Activated CD4-positive, alpha-beta memory T cell treated with anti-CD3 and anti-CD28 coated beads for 36 hours (primary cell): ENCODE measurements at regions of chr15 and their contacts with region 1.

Region 1: GRCh38 chr15:68820295-68821189 is at the start of gene ANP32A:
- DNase-seq: peak; percentile 96
- H3K4me3 Mint-ChIP-seq: peak within 1 kb of the TSS; percentile 99
- H3K27ac Mint-ChIP-seq: peak within 1 kb of the TSS; percentile 99
- H3K4me1 Mint-ChIP-seq: peaks cover 31% of the 10 kb centered on the region
- H3K27me3 Mint-ChIP-seq: no peaks in the 10 kb centered on the region
- total RNA-seq, gene ANP32A: 190 to 204 TPM

Region 2: DNA sequence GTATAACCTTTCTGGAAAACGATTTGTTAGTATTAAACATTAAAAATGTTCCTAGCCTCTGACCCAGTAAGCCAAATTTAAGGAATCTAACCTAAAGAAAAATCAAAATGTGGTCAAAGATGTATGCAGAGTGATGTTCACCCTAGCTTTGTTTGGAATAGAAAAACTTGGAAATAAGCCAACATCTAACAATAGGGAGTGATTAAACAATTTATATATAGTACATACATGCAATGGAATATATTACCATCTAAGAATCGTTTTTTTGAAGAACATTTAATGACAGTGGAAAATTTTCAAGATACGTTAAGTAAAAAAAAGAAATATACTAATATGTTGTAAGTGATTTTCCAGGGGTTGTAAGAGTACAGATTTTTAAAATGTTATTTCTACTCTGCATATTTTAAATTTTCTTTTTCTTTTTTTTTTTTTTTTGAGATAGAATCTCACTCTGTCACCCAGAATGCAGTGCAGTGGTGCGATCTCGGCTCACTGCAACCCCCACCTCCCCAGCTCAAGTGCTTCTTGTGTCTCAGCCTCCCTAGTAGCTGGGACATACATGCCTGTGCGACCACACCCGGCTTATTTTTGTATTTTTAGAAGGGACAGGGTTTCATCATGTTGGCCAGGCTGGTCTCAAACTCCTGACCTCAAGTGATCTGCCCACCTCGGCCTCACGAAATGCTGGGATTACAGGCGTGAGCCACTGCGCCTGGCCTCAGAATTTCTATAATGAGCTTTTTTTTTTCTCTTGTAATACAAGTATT is 54.8 kb before region 1 on chr15:
- CTCF ChIA-PET with region 1: no interaction called
- POLR2A ChIA-PET with region 1: no interaction called
- intact Hi-C with region 1: no loop called
- DNase-seq: no peak
- H3K4me3 Mint-ChIP-seq: no peak overlapping the region
- H3K27ac Mint-ChIP-seq: no peak overlapping the region
- H3K4me1 Mint-ChIP-seq: no peaks in the 10 kb centered on the region
- H3K27me3 Mint-ChIP-seq: peaks cover 12% of the 10 kb centered on the region

Region 3: DNA sequence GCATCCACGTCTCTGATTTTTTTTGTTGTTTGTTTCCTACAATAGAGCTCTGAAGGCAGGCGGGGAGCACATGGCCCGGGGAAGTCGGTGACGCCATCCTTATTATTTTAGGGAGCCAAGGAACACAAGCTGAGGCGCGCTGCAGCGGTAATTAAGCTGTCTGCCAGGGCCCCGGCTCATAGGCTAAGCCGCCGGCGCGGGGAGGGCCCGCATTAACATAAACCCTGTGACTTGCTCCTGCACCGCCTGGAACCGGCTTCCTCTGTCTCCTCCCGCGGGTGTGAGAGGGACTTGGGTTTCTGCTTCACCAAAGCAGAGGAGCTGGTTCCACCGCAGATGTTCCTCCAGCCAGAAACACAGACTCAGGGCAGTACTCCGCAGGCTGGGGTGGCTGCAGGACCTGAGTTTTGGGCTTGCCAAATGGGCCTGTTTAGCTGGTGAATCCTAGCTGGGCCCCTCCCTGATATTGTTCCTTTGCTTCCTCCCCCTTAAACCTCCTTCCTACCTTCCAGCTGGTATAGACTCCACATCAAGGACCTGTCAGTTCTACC is 25.2 kb before region 1 on chr15:
- CTCF ChIA-PET with region 1: interaction called, 4 read pairs
- POLR2A ChIA-PET with region 1: interaction called, 36 read pairs
- intact Hi-C with region 1: loop called (anchors 1 kb)
- DNase-seq: peak; percentile 80
- H3K4me3 Mint-ChIP-seq: peak overlapping the region; percentile 25
- H3K27ac Mint-ChIP-seq: no peak overlapping the region
- H3K4me1 Mint-ChIP-seq: peaks cover 97% of the 10 kb centered on the region
- H3K27me3 Mint-ChIP-seq: no peaks in the 10 kb centered on the region

Region 4: GRCh38 chr15:69452692-69453521 is 632.4 kb after region 1 on chr15 and contains the start of gene RPLP1:
- CTCF ChIA-PET with region 1: no interaction called
- POLR2A ChIA-PET with region 1: interaction called, 4 read pairs
- intact Hi-C with region 1: loop called (anchors 5 kb)
- DNase-seq: peak; percentile 97
- H3K4me3 Mint-ChIP-seq: peak within 1 kb of the TSS; percentile 93
- H3K27ac Mint-ChIP-seq: peak within 1 kb of the TSS; percentile 95
- H3K4me1 Mint-ChIP-seq: peaks cover 23% of the 10 kb centered on the region
- H3K27me3 Mint-ChIP-seq: no peaks in the 10 kb centered on the region
- total RNA-seq, gene RPLP1: 2,547 to 2,620 TPM